Right ventricle myocardium inferior (tissue), 1 donor: ENCODE measurements at regions of chr1 and their contacts with region 1.

Region 1: DNA sequence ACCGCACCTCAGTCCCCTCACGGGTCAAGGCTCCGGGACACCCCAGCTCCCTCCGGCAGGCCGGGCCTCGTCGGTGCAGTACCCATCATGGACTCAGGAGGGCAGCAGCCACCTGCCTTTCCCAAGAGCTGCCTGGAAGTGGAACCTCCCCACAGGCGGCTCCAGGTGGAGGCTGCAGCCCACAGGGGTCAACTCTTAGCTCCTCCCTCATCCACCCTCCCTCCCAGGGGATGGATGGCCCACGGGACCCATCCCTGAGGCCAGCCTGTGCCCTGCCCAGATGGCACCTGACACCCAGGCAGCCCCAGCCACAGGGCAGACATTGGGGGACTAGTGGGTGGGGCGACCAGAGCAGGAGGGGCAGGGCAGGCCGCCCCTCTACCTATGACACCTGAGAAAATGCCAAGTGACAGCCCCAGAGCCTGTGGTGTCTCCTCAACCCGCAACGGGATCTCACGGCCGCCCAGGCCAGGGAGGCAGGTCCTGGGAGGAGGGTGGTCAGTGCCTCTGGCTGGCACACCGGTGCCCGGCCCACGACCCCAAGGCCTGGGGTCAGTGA is 1.2 kb upstream of the ARHGEF16 start:
- DNase-seq: peak; percentile 84
- ATAC-seq: peak; percentile 74

Region 2: DNA sequence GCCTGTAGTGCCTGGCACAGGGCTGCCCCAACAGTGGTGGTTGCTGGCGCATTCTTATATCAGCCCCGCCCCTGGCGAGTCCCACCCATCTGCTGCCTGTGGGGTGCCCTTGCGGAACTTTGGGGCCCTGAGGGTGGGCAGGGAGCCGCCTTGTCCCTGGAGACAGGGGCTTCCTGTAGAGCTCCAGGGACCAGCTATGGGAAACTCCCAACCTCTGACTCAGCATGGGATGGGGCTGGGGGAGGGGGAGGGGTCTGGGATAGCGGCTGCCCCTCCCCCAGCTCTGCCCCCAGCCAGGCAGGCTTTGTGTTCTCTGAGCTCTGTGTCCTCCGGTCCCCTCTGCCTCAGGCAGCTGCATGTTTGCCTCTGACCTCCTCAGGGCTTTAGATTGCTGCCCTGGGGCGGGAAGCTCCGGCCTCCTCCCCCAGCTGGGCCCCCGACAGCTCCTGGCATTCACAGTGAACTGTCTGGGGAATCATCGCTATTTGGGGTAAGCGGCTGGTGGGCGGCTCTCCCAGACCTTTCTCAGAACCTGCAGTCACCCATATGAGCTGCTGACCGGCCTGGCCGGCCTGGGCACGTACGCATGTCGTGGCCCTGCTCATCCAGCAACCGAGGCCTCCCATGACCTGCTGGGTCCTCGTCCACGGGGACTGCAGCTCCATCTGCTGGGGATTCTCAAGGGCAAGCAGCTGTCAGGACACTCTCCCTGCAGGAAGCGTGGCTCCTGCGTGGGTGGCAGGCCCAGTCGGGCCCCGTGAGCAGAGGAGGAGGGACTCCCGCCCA is 18.2 kb after region 1 on chr1:
- intact Hi-C with region 1: loop called (anchors 2 kb)
- DNase-seq: peak; percentile 62
- ATAC-seq: peak; percentile 68

Region 3: GRCh38 chr1:3483801-3484444 is 30.6 kb after region 1 on chr1:
- intact Hi-C with region 1: loop called (anchors 1 kb)
- DNase-seq: no peak
- ATAC-seq: peak; percentile 33

Region 4: GRCh38 chr1:3796215-3797061 is 343.2 kb after region 1 on chr1 and contains the start of gene LRRC47:
- intact Hi-C with region 1: no loop called
- DNase-seq: peak; percentile 99
- ATAC-seq: peak; percentile 100
- total RNA-seq, gene LRRC47: 54.5 TPM